Activated T-helper 2 cell treated with anti-CD3 and anti-CD28 coated beads, Interferon-gamma antibody, Interleukin-2, Interleukin-4, amounts not matched to agents 10 μg/mL and 5 μg/mL and 100 μg/mL, durations not matched to agents 14 hours and 24 hours and 36 hours (primary cell): ENCODE measurements at regions of chrX and their contacts with region 1.

Region 1: GRCh38 chrX:155966865-155967264 is 30.6 kb upstream of the IL9R start:
- DNase-seq: peak; percentile 33
- H3K4me3 Mint-ChIP-seq: no peak overlapping the region
- H3K27ac Mint-ChIP-seq: peak overlapping the region; percentile 46
- H3K4me1 Mint-ChIP-seq: peaks cover 24% of the 10 kb centered on the region
- H3K27me3 Mint-ChIP-seq: peaks cover 14% of the 10 kb centered on the region

Region 2: DNA sequence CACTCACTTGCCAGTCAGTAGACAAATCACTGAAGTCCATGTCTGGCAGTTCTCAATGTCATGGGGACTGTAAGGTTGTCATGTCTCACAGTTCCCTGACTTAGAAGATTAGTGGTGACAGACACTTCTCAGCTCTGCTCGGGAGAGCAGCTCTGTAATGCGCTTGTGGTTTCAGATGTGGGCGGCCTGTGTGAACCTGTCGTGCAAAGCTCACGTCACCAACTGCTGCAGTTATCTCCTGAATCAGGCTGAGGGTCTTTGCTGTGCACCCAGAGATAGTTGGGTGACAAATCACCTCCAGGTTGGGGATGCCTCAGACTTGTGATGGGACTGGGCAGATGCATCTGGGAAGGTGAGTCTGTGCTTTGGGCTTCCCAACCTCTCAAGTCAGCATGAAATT is 30.6 kb after region 1 on chrX and contains the start of gene IL9R:
- intact Hi-C with region 1: loop called (anchors 2 kb)
- DNase-seq: peak; percentile 65
- H3K4me3 Mint-ChIP-seq: peak within 1 kb of the TSS; percentile 94
- H3K27ac Mint-ChIP-seq: peak within 1 kb of the TSS; percentile 98
- H3K4me1 Mint-ChIP-seq: peaks cover 57% of the 10 kb centered on the region
- H3K27me3 Mint-ChIP-seq: no peaks in the 10 kb centered on the region
- total RNA-seq, gene IL9R: 54.7 and 64.9 TPM in 2 replicates